Mammary epithelial cell (primary cell): ENCODE measurements at regions of chr14 and their contacts with region 1.

Region 1: DNA sequence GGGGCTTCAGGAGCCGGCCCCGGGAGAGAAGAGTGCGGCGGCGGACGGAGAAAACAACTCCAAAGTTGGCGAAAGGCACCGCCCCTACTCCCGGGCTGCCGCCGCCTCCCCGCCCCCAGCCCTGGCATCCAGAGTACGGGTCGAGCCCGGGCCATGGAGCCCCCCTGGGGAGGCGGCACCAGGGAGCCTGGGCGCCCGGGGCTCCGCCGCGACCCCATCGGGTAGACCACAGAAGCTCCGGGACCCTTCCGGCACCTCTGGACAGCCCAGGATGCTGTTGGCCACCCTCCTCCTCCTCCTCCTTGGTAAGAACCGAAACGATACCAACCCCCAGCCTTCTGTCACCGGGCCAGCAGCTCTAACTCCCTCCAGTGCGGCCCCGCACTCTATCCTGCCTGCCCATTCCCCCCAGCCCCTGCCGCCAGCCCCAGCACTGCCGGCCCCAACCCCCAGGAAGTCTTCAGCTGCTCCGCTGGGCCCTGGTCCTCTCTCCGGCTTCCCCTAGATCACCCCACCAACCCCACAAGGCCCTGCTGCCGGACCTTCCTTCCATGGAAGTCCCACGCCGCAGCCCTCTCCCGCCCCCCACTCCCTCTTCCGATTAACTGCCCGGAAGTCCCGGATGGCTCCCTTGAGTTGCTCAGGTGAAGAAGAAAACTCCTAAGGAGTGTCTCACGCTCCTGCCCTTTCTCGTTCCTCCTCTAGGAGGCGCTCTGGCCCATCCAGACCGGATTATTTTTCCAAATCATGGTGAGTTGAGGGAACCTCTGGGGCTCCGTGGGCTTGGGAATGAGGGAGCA is 693 bp downstream of the LRP10 start:
- DNase-seq: peak; percentile 85
- H3K4me3 ChIP-seq: peak overlapping the region; percentile 85 to 90 (median 87)
- H3K27ac ChIP-seq: peak overlapping the region; percentile 85
- H3K4me1 ChIP-seq: peaks cover 12% of the 10 kb centered on the region
- H3K27me3 ChIP-seq: no peaks in the 10 kb centered on the region
- CTCF ChIP-seq: peak; percentile 98

Region 2: GRCh38 chr14:22570132-22570949 is 301.9 kb before region 1 on chr14:
- CTCF ChIA-PET with region 1: no interaction called
- dilution Hi-C with region 1: no loop called
- in situ Hi-C with region 1: loop called in 1 of 2 experiments (anchors 25 kb)
- intact Hi-C with region 1: no loop called
- DNase-seq: peak; percentile 66
- H3K4me3 ChIP-seq: no peak overlapping the region
- H3K27ac ChIP-seq: peak overlapping the region; percentile 46
- H3K4me1 ChIP-seq: peaks cover 10% of the 10 kb centered on the region
- H3K27me3 ChIP-seq: no peaks in the 10 kb centered on the region
- CTCF ChIP-seq: peak; percentile 52 to 67

Region 3: DNA sequence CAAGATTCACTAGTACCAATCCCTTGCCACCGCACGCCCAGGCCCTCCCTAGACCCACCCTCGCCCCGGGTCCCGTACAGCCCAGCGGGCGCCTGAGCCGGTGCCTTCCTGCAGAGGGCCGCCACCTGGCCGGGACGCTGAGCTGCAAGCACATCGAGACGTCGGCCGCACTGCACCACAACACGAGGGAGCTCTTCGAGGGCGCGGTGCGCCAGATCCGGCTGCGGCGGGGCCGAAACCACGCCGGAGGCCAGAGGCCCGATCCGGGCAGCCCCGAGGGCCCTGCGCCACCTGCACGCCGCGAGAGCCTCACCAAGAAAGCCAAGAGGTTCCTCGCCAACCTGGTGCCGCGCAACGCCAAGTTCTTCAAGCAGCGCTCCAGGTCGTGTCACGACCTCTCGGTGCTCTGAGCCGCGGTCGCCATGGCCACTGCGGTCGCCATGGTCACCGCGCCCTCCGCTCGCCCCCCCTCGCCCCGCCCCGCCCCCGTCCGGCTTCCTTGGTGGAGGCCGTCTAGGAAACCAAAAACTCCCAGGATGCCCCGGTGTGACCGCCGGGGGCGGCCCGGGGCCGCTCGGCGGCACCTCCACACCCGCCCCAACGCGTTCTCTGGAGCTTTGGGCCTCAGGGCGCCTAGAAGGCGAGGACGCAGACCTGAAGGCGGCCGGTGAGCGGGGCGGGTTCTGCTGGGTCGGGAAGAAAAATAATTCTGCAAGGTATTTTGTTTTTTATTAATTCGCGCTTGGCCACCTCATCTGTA is 14.4 kb after region 1 on chr14:
- CTCF ChIA-PET with region 1: interaction called, 7 read pairs
- dilution Hi-C with region 1: no loop called
- in situ Hi-C with region 1: no loop called
- intact Hi-C with region 1: loop called (anchors 2 kb)
- DNase-seq: peak; percentile 56
- H3K4me3 ChIP-seq: peak overlapping the region; percentile 49 to 61 (median 50)
- H3K27ac ChIP-seq: peak overlapping the region; percentile 58
- H3K4me1 ChIP-seq: peaks cover 35% of the 10 kb centered on the region
- H3K27me3 ChIP-seq: no peaks in the 10 kb centered on the region
- CTCF ChIP-seq: peak in 1 of 2 donors; percentile 25

Region 4: DNA sequence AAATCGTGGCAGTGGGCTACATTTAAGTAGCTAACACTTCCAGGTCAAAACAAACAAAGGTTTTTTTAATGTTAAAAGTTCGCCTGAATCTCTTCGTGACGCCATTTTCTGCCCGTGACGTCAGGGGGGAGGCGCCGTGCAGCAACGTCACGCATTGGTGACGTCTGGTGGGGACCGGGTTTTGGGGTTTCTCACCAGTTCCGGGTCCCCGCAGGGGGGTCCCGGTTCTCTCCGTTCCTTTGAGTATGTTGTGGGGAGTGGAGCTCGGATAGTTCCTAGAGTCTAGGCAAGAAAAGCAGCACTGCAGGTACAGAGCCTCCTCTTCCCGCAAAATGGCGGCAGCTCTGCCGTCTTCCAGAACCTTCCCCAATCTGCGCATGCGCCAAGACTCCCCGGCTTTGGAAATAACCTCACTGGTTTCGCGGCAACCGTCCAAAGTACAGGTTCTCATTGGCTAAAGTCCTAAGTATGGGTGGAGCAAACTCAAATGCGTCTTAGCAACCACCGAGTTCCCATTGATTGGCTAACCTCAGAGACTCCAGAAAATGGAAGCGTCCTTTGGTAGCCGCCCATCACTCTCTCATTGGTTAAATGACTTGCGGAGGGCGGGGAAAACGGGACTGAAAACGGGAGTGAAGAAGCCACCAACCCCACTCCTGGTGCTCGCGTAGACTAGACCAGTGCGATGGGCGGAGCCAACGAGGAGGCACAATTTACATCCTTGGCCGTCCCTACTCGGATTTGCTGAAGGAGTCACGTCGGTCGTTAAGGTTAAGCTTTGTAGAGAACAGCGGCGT is 46.8 kb after region 1 on chr14 and contains the start of gene RBM23:
- CTCF ChIA-PET with region 1: interaction called, 11 read pairs
- dilution Hi-C with region 1: no loop called
- in situ Hi-C with region 1: no loop called
- intact Hi-C with region 1: no loop called
- DNase-seq: peak; percentile 100
- H3K4me3 ChIP-seq: peak within 1 kb of the TSS; percentile 70 to 99 (median 90)
- H3K27ac ChIP-seq: peak within 1 kb of the TSS; percentile 99
- H3K4me1 ChIP-seq: peaks cover 18% of the 10 kb centered on the region
- H3K27me3 ChIP-seq: no peaks in the 10 kb centered on the region
- CTCF ChIP-seq: no peak
- total RNA-seq, gene RBM23: 38.7 to 55.8 TPM

Region 5: DNA sequence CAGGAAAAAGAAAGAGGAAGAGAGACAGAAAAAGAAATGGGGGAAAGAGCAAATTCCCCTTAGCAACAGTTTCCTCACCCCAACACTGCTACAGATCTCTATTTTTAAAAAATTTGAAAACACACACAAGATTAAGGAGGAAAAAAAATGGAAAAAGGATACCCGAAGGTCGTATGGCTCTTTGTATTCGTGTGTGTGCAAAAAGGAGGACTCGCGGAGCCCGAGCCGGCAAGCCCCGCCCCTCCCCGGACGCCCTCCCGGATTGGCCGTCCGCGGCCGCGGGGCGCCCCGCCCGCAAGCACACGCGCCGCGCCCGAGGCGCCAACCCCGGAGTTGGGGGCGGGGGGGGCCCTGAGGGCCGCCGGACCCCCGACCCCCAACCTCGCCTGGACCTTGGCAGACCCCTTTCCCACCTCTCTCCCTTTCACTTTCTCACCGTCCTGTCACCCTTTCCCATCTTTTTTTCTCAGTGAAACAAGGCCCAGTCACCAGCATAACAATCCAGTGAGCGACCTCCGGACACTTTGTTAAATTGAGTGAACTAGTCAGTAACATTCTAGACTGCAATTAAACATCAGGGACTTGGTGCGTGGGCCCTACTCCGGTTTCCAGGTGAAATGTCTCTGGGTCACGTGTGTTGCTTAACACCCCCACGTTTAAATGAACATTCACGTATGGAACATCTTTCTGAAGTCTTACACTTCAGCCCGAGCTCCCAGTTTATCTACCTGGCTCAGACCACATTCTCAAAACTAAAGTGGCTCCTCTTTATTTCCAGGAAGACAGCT is 137.9 kb after region 1 on chr14 and contains the start of gene C14orf93:
- CTCF ChIA-PET with region 1: no interaction called
- dilution Hi-C with region 1: no loop called
- in situ Hi-C with region 1: no loop called
- intact Hi-C with region 1: no loop called
- DNase-seq: peak; percentile 53
- H3K4me3 ChIP-seq: peak within 1 kb of the TSS; percentile 54 to 90 (median 58)
- H3K27ac ChIP-seq: peak within 1 kb of the TSS; percentile 49
- H3K4me1 ChIP-seq: peaks cover 24% of the 10 kb centered on the region
- H3K27me3 ChIP-seq: no peaks in the 10 kb centered on the region
- CTCF ChIP-seq: no peak
- total RNA-seq, gene C14orf93: 3.6 to 6.7 TPM

Region 6: GRCh38 chr14:23025151-23025814 is 153.1 kb after region 1 on chr14:
- CTCF ChIA-PET with region 1: no interaction called
- dilution Hi-C with region 1: no loop called
- in situ Hi-C with region 1: no loop called
- intact Hi-C with region 1: no loop called
- DNase-seq: no peak
- H3K4me3 ChIP-seq: no peak overlapping the region
- H3K27ac ChIP-seq: no peak overlapping the region
- H3K4me1 ChIP-seq: no peaks in the 10 kb centered on the region
- H3K27me3 ChIP-seq: no peaks in the 10 kb centered on the region
- CTCF ChIP-seq: no peak

Region 7: GRCh38 chr14:23057757-23058653 is 185.8 kb after region 1 on chr14:
- CTCF ChIA-PET with region 1: no interaction called
- dilution Hi-C with region 1: no loop called
- in situ Hi-C with region 1: no loop called
- intact Hi-C with region 1: loop called (anchors 5 kb)
- DNase-seq: peak; percentile 74
- H3K4me3 ChIP-seq: peak overlapping the region; percentile 50 to 65 (median 55)
- H3K27ac ChIP-seq: no peak overlapping the region
- H3K4me1 ChIP-seq: peaks cover 31% of the 10 kb centered on the region
- H3K27me3 ChIP-seq: no peaks in the 10 kb centered on the region
- CTCF ChIP-seq: peak; percentile 82 to 93

Region 8: GRCh38 chr14:23154964-23155587 is 282.8 kb after region 1 on chr14:
- CTCF ChIA-PET with region 1: no interaction called
- dilution Hi-C with region 1: no loop called
- in situ Hi-C with region 1: no loop called
- intact Hi-C with region 1: no loop called
- DNase-seq: peak; percentile 58
- H3K4me3 ChIP-seq: no peak overlapping the region
- H3K27ac ChIP-seq: peak overlapping the region; percentile 50
- H3K4me1 ChIP-seq: peaks cover 27% of the 10 kb centered on the region
- H3K27me3 ChIP-seq: no peaks in the 10 kb centered on the region
- CTCF ChIP-seq: no peak